ENCODE measurements at regions of chr6 and their contacts with region 1.

Region 1: GRCh38 chr6:137697267-137697938 is 169.7 kb upstream of the TNFAIP3 start:
- DNase-seq: no peak
- H3K4me3 Mint-ChIP-seq: no peak overlapping the region
- H3K27ac Mint-ChIP-seq: peak overlapping the region; percentile 51
- H3K4me1 Mint-ChIP-seq: peaks cover 51% of the 10 kb centered on the region
- H3K27me3 Mint-ChIP-seq: no peaks in the 10 kb centered on the region

Region 2: DNA sequence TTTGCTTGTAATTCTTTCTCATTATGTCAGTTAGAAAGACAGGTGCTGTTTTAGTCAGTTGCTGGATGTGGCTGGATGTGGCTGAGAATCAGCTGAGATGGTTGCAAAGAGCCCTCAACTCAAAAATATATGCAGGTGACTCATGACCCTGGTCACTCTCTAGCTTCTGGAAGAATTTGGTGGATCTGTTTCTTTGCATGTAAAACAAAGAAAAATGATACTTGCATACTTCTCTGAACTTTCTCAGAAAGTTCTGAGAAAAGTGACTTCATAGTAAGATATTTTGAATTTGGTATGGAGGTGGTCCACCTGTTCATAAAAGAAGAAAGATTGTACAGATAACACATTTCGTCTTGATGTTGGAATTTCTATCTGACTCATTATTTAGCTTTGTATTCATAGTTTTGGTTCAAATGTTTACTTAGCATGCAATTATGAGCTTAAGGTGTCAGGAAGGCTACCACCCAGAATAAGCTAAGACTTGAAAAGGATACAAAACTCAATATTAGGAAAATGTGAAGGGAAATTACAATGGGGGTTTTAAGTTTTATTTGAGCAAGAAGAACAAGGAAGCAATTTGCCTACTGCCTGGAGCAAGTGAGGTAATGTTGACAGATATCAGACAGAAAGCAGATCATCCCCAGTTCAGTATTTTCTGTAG is 39.9 kb before region 1 on chr6:
- intact Hi-C with region 1: loop called (anchors 2 kb)
- DNase-seq: peak; percentile 79
- H3K4me3 Mint-ChIP-seq: peak overlapping the region; percentile 4
- H3K27ac Mint-ChIP-seq: peak overlapping the region; percentile 45
- H3K4me1 Mint-ChIP-seq: peaks cover 29% of the 10 kb centered on the region
- H3K27me3 Mint-ChIP-seq: no peaks in the 10 kb centered on the region

Region 3: GRCh38 chr6:137722749-137723272 is 25.4 kb after region 1 on chr6:
- intact Hi-C with region 1: loop called (anchors 1 kb)
- DNase-seq: peak; percentile 80
- H3K4me3 Mint-ChIP-seq: peak overlapping the region; percentile 13
- H3K27ac Mint-ChIP-seq: peak overlapping the region; percentile 76
- H3K4me1 Mint-ChIP-seq: peaks cover 26% of the 10 kb centered on the region
- H3K27me3 Mint-ChIP-seq: peaks cover 3% of the 10 kb centered on the region